ENCODE measurements at regions of chr2 and their contacts with region 1.

Region 1: GRCh38 chr2:237165405-237166276 is 80.0 kb downstream of the COPS8 start:
- DNase-seq: peak; percentile 69
- ATAC-seq: peak; percentile 63
- H3K4me3 ChIP-seq: no peak overlapping the region
- H3K27ac ChIP-seq: peak overlapping the region; percentile 15; the same call in 1 of the 2 replicates
- H3K4me1 ChIP-seq: peaks cover 12% of the 10 kb centered on the region
- H3K27me3 ChIP-seq: no peaks in the 10 kb centered on the region
- CTCF ChIP-seq: peak; percentile 61
- POLR2A ChIP-seq: no peak
- RAD21 ChIP-seq: peak; percentile 76

Region 2: GRCh38 chr2:237011206-237011795 is 154.3 kb before region 1 on chr2:
- CTCF ChIA-PET with region 1: no interaction called
- POLR2A ChIA-PET with region 1: no interaction called
- dilution Hi-C with region 1: no loop called
- in situ Hi-C with region 1: no loop called
- intact Hi-C with region 1: no loop called
- DNase-seq: peak; percentile 6
- ATAC-seq: no peak
- H3K4me3 ChIP-seq: no peak overlapping the region
- H3K27ac ChIP-seq: no peak overlapping the region
- H3K4me1 ChIP-seq: peaks cover 2% of the 10 kb centered on the region
- H3K27me3 ChIP-seq: peaks cover 14% of the 10 kb centered on the region
- CTCF ChIP-seq: no peak
- POLR2A ChIP-seq: no peak
- RAD21 ChIP-seq: no peak

Region 3: GRCh38 chr2:237132799-237133198 is 32.8 kb before region 1 on chr2:
- CTCF ChIA-PET with region 1: no interaction called
- POLR2A ChIA-PET with region 1: no interaction called
- dilution Hi-C with region 1: no loop called
- in situ Hi-C with region 1: no loop called
- intact Hi-C with region 1: no loop called
- DNase-seq: no peak
- ATAC-seq: no peak
- H3K4me3 ChIP-seq: no peak overlapping the region
- H3K27ac ChIP-seq: no peak overlapping the region
- H3K4me1 ChIP-seq: peaks cover 14% of the 10 kb centered on the region
- H3K27me3 ChIP-seq: no peaks in the 10 kb centered on the region
- CTCF ChIP-seq: 0 out of 2 replicates have a peak, but pooled peaks have one; percentile 10
- POLR2A ChIP-seq: no peak
- RAD21 ChIP-seq: no peak

Region 4: GRCh38 chr2:237262838-237263771 is 97.5 kb after region 1 on chr2:
- CTCF ChIA-PET with region 1: interaction called, 7 read pairs
- POLR2A ChIA-PET with region 1: interaction called, 11 read pairs
- dilution Hi-C with region 1: no loop called
- in situ Hi-C with region 1: no loop called
- intact Hi-C with region 1: no loop called
- DNase-seq: peak; percentile 89
- ATAC-seq: peak; percentile 10
- H3K4me3 ChIP-seq: no peak overlapping the region
- H3K27ac ChIP-seq: peak overlapping the region; percentile 92
- H3K4me1 ChIP-seq: peaks cover 30% of the 10 kb centered on the region
- H3K27me3 ChIP-seq: no peaks in the 10 kb centered on the region
- CTCF ChIP-seq: no peak
- POLR2A ChIP-seq: no peak
- RAD21 ChIP-seq: no peak

Region 5: DNA sequence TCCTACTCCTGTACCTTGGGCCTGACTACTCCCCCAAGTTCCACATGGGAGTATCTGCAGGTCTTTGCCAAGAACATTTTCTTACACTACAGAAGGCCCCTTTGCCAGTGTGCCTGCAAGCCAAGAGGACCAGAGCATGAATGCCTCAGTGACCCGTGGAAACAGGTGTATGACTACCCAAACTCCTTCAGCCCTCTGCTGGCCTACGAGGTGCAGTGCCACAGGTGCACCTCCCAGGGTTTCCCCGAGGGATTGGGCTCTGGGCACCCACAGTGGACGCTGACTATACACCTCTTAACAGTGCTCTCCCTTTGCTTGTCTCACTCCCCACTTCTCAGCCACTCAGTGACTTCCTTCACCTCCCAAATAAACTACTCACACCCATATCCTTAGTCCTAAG is 156.9 kb after region 1 on chr2:
- CTCF ChIA-PET with region 1: no interaction called
- POLR2A ChIA-PET with region 1: no interaction called
- dilution Hi-C with region 1: no loop called
- in situ Hi-C with region 1: loop called (anchors 10 kb)
- intact Hi-C with region 1: loop called (anchors 2 kb)
- DNase-seq: no peak
- ATAC-seq: no peak
- H3K4me3 ChIP-seq: no peak overlapping the region
- H3K27ac ChIP-seq: peak overlapping the region; percentile 96
- H3K4me1 ChIP-seq: peaks cover 27% of the 10 kb centered on the region
- H3K27me3 ChIP-seq: no peaks in the 10 kb centered on the region
- CTCF ChIP-seq: peak; percentile 27; the same call in 1 of the 2 replicates
- POLR2A ChIP-seq: peak; percentile 16
- RAD21 ChIP-seq: peak; percentile 24; the same call in 1 of the 2 replicates

Region 6: GRCh38 chr2:238024986-238025385 is 859.3 kb after region 1 on chr2:
- CTCF ChIA-PET with region 1: no interaction called
- POLR2A ChIA-PET with region 1: no interaction called
- dilution Hi-C with region 1: no loop called
- in situ Hi-C with region 1: no loop called
- intact Hi-C with region 1: no loop called
- DNase-seq: peak; percentile 89
- ATAC-seq: peak; percentile 64
- H3K4me3 ChIP-seq: no peak overlapping the region
- H3K27ac ChIP-seq: no peak overlapping the region
- H3K4me1 ChIP-seq: peaks cover 12% of the 10 kb centered on the region
- H3K27me3 ChIP-seq: no peaks in the 10 kb centered on the region
- CTCF ChIP-seq: 0 out of 2 replicates have a peak, but pooled peaks have one; percentile 4
- POLR2A ChIP-seq: no peak
- RAD21 ChIP-seq: peak; percentile 8; the same call in 1 of the 2 replicates